ENCODE measurements at regions of chrX and their contacts with region 1.

Region 1: DNA sequence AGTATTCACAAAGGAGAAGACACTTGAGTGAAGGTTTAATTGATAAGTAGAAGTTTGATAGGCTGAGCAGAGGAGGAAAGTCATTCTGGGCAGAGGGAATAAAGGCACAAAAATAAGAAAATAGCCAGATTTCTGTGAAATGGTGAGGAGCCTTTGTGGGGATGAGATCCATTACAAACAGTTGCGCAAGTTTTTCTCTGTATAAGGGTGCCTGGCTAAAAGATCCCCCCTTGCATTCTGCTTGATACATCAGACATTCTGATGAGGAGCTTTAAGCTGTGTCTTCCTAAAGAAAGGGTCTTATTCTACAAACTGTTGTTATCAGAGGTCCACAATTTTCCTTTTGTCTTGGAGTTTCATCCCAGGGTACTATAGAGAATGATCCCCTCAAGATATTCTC is 112.0 kb downstream of the ARHGAP36 start:
- DNase-seq: no peak

Region 2: GRCh38 chrX:130937101-130937500 is 233.0 kb before region 1 on chrX:
- intact Hi-C with region 1: loop called in 1 of 2 experiments (anchors 5 kb)
- DNase-seq: no peak

Region 3: DNA sequence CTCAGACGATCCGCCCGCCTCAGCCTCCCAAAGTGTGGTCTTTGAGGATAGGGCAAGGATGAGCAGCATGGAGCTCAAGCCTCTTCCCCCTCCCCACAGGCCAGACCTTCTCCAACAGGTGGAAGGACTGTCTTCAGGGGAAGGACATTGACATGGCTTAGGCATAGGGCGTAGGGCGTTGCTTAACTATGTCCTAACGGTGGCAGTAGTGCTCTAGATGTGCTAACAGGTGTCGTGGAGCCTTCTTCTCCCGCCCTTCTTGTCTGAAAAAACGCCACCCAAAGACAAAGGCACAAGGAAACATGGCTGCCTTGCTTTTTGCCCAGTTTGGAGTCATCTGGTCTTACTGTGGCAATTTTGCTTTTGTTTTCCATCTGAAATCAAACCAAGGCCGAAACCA is 593.5 kb after region 1 on chrX:
- intact Hi-C with region 1: no loop called
- DNase-seq: peak; percentile 89

Measured in posterior vena cava (tissue), 2 donors.